ENCODE measurements at regions of chr16 and their contacts with region 1.

Region 1: DNA sequence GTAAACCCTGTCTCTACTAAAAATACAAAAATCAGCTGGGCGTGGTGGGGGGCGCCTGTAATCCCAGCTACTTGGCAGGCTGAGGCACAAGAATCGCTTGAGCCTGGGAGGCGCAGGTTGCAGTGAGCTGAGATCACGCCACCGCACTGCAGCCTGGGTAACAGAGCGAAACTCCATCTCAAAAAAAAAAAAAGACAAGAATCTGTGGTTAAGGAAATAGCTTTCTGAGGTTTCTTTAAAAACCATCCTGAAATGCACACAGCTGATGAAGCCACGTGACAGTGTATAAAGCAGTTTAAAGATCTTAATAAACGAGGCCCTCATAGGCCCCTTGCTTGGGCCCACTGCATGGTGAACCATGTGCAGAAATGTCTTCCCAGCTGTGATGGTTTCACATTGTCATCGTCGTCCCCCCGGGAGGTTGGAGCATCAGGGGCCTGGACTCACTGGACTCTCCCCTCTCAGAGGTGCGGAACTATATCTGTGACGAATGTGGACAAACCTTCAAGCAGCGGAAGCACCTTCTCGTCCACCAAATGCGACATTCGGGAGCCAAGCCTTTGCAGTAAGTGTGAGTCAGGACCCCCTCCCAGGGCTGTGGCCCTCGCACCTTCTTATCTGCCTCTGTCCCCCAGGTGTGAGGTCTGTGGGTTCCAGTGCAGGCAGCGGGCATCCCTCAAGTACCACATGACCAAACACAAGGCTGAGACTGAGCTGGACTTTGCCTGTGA is 16.2 kb downstream of the ZNF276 start:
- DNase-seq: no peak
- ATAC-seq: no peak
- H3K4me3 ChIP-seq: no peak overlapping the region
- H3K27ac ChIP-seq: no peak overlapping the region
- H3K4me1 ChIP-seq: no peaks in the 10 kb centered on the region
- H3K27me3 ChIP-seq: no peaks in the 10 kb centered on the region
- CTCF ChIP-seq: no peak
- POLR2A ChIP-seq: no peak

Region 2: GRCh38 chr16:89720813-89721545 is 16.5 kb before region 1 on chr16 and contains the starts of genes VPS9D1 and ZNF276:
- intact Hi-C with region 1: loop called in 1 of 10 experiments (anchors 2 kb)
- DNase-seq: peak; percentile 89 to 93 (median 90)
- ATAC-seq: peak; percentile 35 to 84 (median 76)
- H3K4me3 ChIP-seq: peak within 1 kb of the TSS; percentile 74 to 98 (median 92)
- H3K27ac ChIP-seq: peak within 1 kb of the TSS; percentile 95 to 100 (median 98)
- H3K4me1 ChIP-seq: peaks cover 8 to 60% (median 34%) of the 10 kb centered on the region in 12 donors
- H3K27me3 ChIP-seq: no peaks in the 10 kb centered on the region
- CTCF ChIP-seq: no peak
- POLR2A ChIP-seq: peak in 1 of 2 donors; percentile 49
- total RNA-seq, gene VPS9D1: 7.6 to 17.0 (median 11.0) TPM
- total RNA-seq, gene ZNF276: 9.4 to 19.9 (median 12.7) TPM